Heart left ventricle (tissue), 16 donors: ENCODE measurements at regions of chr3 and their contacts with region 1.

Region 1: GRCh38 chr3:187679638-187680396 is 9.6 kb upstream of the SST start:
- DNase-seq: peak; percentile 69 to 76 (median 74)
- ATAC-seq: peak; percentile 85 to 96 (median 94)
- H3K4me3 ChIP-seq: no peak overlapping the region
- H3K27ac ChIP-seq: no peak overlapping the region
- H3K4me1 ChIP-seq: peaks cover 0 to 11% (median 6%) of the 10 kb centered on the region in 12 donors
- H3K27me3 ChIP-seq: peaks cover 0 to 25% (median 0%) of the 10 kb centered on the region in 9 donors
- CTCF ChIP-seq: peak; percentile 83 to 95 (median 90)
- POLR2A ChIP-seq: no peak

Region 2: GRCh38 chr3:187227658-187228258 is 452.1 kb before region 1 on chr3:
- intact Hi-C with region 1: loop called in 2 of 10 experiments (anchors 2 to 5 kb)
- DNase-seq: no peak
- ATAC-seq: no peak
- H3K4me3 ChIP-seq: no peak overlapping the region
- H3K27ac ChIP-seq: no peak overlapping the region
- H3K4me1 ChIP-seq: no peaks in the 10 kb centered on the region
- H3K27me3 ChIP-seq: no peaks in the 10 kb centered on the region
- CTCF ChIP-seq: no peak
- POLR2A ChIP-seq: no peak

Region 3: GRCh38 chr3:187319699-187320302 is 360.0 kb before region 1 on chr3:
- intact Hi-C with region 1: loop called (anchors 1 to 2 kb)
- DNase-seq: peak; percentile 62 to 75 (median 72)
- ATAC-seq: peak; percentile 85 to 96 (median 94)
- H3K4me3 ChIP-seq: peak overlapping the region in 4 of 12 donors; percentile 34 to 48 (median 41)
- H3K27ac ChIP-seq: peak overlapping the region in 4 of 12 donors; percentile 7 to 49 (median 40)
- H3K4me1 ChIP-seq: peaks cover 0 to 16% (median 10%) of the 10 kb centered on the region in 12 donors
- H3K27me3 ChIP-seq: peaks cover 0 to 9% (median 0%) of the 10 kb centered on the region in 9 donors
- CTCF ChIP-seq: peak; percentile 80 to 97 (median 92)
- POLR2A ChIP-seq: no peak

Region 4: DNA sequence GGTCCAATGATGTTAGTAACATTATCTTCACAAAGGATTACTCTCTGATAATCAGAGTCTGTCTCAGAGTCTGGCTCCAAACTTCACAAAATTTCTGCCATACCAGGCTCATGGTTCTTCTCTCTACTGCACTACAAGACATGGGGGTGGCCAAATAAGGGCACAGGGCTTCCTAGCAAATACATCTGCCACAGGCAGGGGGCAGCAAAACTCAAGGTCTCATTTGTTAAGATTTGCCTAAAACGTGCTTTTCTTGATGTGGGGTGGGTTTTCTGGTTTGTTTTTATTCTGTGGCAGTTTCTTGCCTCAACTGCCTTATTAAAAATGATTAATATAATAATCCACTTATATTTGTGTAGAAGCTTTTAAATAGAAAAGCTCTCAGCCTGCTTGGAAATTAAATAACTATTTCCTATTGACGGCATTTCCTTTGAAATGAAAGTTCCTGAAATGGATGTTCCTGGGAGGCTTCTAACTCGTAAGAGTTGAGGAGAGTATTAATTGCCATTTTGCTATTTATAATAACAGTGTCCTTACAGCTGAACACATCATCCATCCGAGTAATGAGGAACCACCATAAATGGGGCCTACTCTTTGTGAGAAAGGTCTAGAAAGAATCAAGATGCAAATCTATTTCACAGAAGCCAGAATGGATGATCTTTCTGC is 63.4 kb before region 1 on chr3:
- intact Hi-C with region 1: loop called in 4 of 10 experiments (anchors 2 to 5 kb)
- DNase-seq: peak in 2 of 5 donors; percentile 14 to 32
- ATAC-seq: peak in 1 of 4 donors; percentile 54
- H3K4me3 ChIP-seq: no peak overlapping the region
- H3K27ac ChIP-seq: no peak overlapping the region
- H3K4me1 ChIP-seq: peaks cover 0 to 10% (median 0%) of the 10 kb centered on the region in 12 donors
- H3K27me3 ChIP-seq: no peaks in the 10 kb centered on the region
- CTCF ChIP-seq: peak; percentile 46 to 70 (median 62)
- POLR2A ChIP-seq: no peak

Region 5: GRCh38 chr3:187714404-187714979 is 34.7 kb after region 1 on chr3:
- intact Hi-C with region 1: loop called in 5 of 10 experiments (anchors 1 to 5 kb)
- DNase-seq: peak in 4 of 5 donors; percentile 59 to 63 (median 62)
- ATAC-seq: peak; percentile 70 to 90 (median 90)
- H3K4me3 ChIP-seq: no peak overlapping the region
- H3K27ac ChIP-seq: peak overlapping the region in 1 of 12 donors; percentile 3
- H3K4me1 ChIP-seq: peaks cover 0 to 9% (median 0%) of the 10 kb centered on the region in 12 donors
- H3K27me3 ChIP-seq: no peaks in the 10 kb centered on the region
- CTCF ChIP-seq: peak; percentile 87 to 97 (median 92)
- POLR2A ChIP-seq: no peak

Region 6: GRCh38 chr3:187719628-187720336 is 40.0 kb after region 1 on chr3:
- intact Hi-C with region 1: loop called in 4 of 10 experiments (anchors 1 to 5 kb)
- DNase-seq: no peak
- ATAC-seq: peak; percentile 12 to 64 (median 56)
- H3K4me3 ChIP-seq: no peak overlapping the region
- H3K27ac ChIP-seq: peak overlapping the region in 1 of 12 donors; percentile 61
- H3K4me1 ChIP-seq: peaks cover 0 to 7% (median 0%) of the 10 kb centered on the region in 12 donors
- H3K27me3 ChIP-seq: no peaks in the 10 kb centered on the region
- CTCF ChIP-seq: no peak
- POLR2A ChIP-seq: no peak

Region 7: GRCh38 chr3:187745201-187746058 is 65.6 kb after region 1 on chr3 and contains the start of gene BCL6:
- intact Hi-C with region 1: no loop called
- DNase-seq: peak; percentile 94 to 96 (median 94)
- ATAC-seq: peak; percentile 68 to 84 (median 72)
- H3K4me3 ChIP-seq: peak within 1 kb of the TSS; percentile 54 to 89 (median 78)
- H3K27ac ChIP-seq: peak within 1 kb of the TSS; percentile 94 to 100 (median 98)
- H3K4me1 ChIP-seq: peaks cover 0 to 49% (median 14%) of the 10 kb centered on the region in 12 donors
- H3K27me3 ChIP-seq: no peaks in the 10 kb centered on the region
- CTCF ChIP-seq: peak in 2 of 12 donors; percentile 10 to 13
- POLR2A ChIP-seq: peak; percentile 84 to 92
- total RNA-seq, gene BCL6: 29.7 to 109 (median 62.0) TPM